ENCODE measurements at regions of chr12 and their contacts with region 1.

Region 1: GRCh38 chr12:110577717-110578521 is 5.2 kb downstream of the PPTC7 start:
- DNase-seq: peak; percentile 51
- H3K4me3 Mint-ChIP-seq: peak overlapping the region; percentile 95
- H3K27ac Mint-ChIP-seq: peak overlapping the region; percentile 98
- H3K4me1 Mint-ChIP-seq: peaks cover 70% of the 10 kb centered on the region
- H3K27me3 Mint-ChIP-seq: no peaks in the 10 kb centered on the region

Region 2: DNA sequence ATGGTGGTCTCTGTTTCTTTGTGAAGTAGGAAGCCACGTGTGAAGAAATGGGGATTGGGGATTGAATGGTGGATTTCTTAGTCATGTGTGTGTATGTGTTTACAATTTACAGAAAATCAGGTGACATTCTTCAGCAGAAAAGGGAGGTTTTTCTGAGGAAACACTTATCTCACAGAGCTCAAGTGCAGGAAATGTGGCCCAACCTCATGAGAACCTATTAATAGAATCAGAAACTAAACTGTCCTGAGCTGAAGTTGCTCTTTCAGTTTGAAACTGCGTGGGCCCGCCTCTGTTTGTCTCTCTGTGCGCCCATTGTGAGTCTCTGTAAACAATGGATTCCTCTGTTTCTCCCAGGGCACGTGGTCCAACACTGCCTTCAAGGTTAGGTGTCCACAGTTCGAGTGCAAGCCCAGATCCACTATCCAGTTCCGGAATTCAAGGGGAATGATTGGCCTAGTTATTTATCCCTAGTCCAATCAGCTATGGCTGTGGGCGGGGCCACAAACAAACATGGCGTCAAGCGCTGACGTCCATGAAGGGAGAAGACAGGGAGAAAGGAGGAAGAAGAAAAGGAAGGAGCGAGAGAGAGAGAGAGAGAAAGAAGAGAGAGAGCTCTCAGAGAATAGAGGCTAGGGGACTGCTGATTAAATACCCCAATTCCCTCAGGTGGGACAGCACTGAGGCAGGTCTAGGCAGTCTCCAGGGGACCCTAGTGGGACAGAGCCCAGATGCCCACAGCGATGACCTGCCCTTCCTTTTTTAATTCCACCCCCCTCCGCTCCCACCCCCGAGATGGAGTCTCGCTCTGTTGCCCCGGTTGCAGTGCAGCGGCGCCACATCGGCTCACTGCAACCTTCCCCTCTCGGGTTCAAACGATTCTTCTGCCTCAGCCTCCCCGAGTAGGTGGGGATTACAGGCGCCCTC is 498.2 kb before region 1 on chr12:
- intact Hi-C with region 1: loop called (anchors 1 kb)
- DNase-seq: peak; percentile 76
- H3K4me3 Mint-ChIP-seq: peak overlapping the region; percentile 66
- H3K27ac Mint-ChIP-seq: peak overlapping the region; percentile 98
- H3K4me1 Mint-ChIP-seq: peaks cover 43% of the 10 kb centered on the region
- H3K27me3 Mint-ChIP-seq: no peaks in the 10 kb centered on the region

Region 3: GRCh38 chr12:110531741-110532333 is 46.1 kb before region 1 on chr12:
- intact Hi-C with region 1: loop called (anchors 1 kb)
- DNase-seq: no peak
- H3K4me3 Mint-ChIP-seq: no peak overlapping the region
- H3K27ac Mint-ChIP-seq: peak overlapping the region; percentile 51
- H3K4me1 Mint-ChIP-seq: peaks cover 30% of the 10 kb centered on the region
- H3K27me3 Mint-ChIP-seq: no peaks in the 10 kb centered on the region

Region 4: DNA sequence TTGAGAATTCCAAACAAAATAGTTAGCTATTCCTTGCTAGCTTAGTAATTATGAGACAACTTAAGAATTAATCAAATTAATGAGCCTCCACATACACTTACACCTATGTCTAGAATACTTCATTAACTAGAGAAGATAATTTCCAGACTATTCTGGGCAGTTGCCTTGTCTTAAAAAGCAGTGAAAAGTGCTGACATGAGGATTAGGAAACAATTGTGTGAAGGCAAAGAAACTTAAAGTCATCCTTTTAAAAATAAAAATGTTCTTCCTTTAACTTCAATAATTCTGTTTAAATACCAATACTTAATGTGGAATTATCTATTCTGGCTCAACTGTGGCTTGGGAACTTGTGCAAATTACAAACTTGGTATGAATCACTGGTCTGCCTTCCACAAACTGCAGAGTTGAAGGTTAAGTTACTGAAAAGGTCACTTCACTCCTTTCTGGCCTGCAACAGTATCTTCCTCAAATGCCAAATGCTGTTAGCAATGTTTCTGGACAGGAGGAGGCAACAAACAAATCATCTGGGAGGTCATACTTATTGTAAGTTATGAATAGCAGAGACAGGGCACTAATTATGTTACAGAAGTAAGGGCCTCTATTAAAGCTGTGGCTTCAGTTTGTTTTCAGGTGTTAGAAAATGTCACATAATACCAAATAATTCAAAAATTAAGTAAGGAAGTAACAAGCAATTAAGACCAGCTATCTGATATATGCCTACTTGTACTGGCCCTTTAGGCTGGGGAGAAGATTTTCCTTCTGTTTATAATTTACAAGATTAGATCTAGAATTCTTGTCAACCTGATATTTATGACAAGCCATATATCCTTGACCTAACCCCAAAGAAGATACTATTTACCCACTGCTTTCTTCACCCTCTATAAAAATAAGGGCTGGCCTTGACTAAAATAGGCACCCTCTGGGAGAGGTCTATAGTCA is 13.9 kb before region 1 on chr12:
- intact Hi-C with region 1: loop called (anchors 1 kb)
- DNase-seq: no peak
- H3K4me3 Mint-ChIP-seq: peak overlapping the region; percentile 4
- H3K27ac Mint-ChIP-seq: peak overlapping the region; percentile 72
- H3K4me1 Mint-ChIP-seq: peaks cover 58% of the 10 kb centered on the region
- H3K27me3 Mint-ChIP-seq: no peaks in the 10 kb centered on the region

Region 5: GRCh38 chr12:110600254-110600653 is 22.3 kb after region 1 on chr12:
- intact Hi-C with region 1: no loop called
- DNase-seq: no peak
- H3K4me3 Mint-ChIP-seq: no peak overlapping the region
- H3K27ac Mint-ChIP-seq: no peak overlapping the region
- H3K4me1 Mint-ChIP-seq: peaks cover 12% of the 10 kb centered on the region
- H3K27me3 Mint-ChIP-seq: no peaks in the 10 kb centered on the region

Region 6: GRCh38 chr12:110619534-110619953 is 41.6 kb after region 1 on chr12:
- intact Hi-C with region 1: loop called (anchors 1 kb)
- DNase-seq: no peak
- H3K4me3 Mint-ChIP-seq: peak overlapping the region; percentile 37
- H3K27ac Mint-ChIP-seq: peak overlapping the region; percentile 77
- H3K4me1 Mint-ChIP-seq: peaks cover 10% of the 10 kb centered on the region
- H3K27me3 Mint-ChIP-seq: peaks cover 4% of the 10 kb centered on the region

Region 7: GRCh38 chr12:111546758-111547383 is 969.0 kb after region 1 on chr12:
- intact Hi-C with region 1: loop called (anchors 2 kb)
- DNase-seq: no peak
- H3K4me3 Mint-ChIP-seq: peak overlapping the region; percentile 11
- H3K27ac Mint-ChIP-seq: peak overlapping the region; percentile 95
- H3K4me1 Mint-ChIP-seq: peaks cover 29% of the 10 kb centered on the region
- H3K27me3 Mint-ChIP-seq: no peaks in the 10 kb centered on the region